ENCODE measurements at regions of chr17 and their contacts with region 1.

Region 1: GRCh38 chr17:17356149-17356930 is 53.2 kb downstream of the NT5M start:
- DNase-seq: peak; percentile 82
- H3K4me3 ChIP-seq: no peak overlapping the region
- H3K27ac ChIP-seq: no peak overlapping the region
- H3K4me1 ChIP-seq: no peaks in the 10 kb centered on the region
- CTCF ChIP-seq: peak; percentile 100

Region 2: DNA sequence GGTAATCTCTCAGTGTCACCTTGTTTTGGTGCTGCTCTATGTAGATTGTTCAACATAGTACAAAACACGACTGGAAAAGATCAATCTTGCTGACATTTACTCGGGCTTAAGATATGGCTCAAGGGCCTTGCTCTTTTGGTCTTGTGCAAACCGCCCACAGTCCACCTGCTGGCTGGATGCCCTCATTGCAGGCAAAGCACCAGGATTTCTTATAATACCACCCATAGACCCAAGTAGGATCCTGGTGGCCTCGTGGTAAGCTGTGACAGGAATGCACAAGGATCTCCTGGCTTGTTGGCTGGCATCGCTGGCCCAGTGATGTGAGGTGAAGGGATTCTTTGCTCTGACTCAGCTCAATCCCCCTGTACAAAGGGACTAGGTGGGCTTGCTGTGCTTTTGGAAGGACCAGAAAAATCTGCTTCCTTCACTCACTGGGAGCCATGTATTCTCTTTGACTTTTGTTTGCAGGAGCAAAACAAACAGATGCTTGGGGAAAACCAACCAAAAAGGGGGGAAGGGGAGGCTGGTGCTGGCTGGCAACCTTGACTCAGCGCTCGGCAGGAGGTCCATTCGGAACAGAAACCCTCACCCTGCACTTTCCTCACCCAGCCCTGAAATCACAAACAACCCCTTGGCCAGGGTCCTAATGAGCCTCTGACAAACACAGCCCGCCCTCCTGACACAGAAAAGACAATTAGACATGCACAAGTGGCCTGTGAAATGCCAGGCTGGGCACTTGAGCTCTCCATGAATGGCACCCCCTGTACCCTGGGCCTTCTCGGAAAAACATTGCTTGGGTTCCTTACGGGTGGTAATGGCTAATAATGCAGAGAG is 83.9 kb after region 1 on chr17:
- CTCF ChIA-PET with region 1: no interaction called
- POLR2A ChIA-PET with region 1: no interaction called
- intact Hi-C with region 1: loop called (anchors 1 kb)
- DNase-seq: peak; percentile 75
- H3K4me3 ChIP-seq: no peak overlapping the region
- H3K27ac ChIP-seq: no peak overlapping the region
- H3K4me1 ChIP-seq: no peaks in the 10 kb centered on the region
- CTCF ChIP-seq: peak; percentile 87

Region 3: DNA sequence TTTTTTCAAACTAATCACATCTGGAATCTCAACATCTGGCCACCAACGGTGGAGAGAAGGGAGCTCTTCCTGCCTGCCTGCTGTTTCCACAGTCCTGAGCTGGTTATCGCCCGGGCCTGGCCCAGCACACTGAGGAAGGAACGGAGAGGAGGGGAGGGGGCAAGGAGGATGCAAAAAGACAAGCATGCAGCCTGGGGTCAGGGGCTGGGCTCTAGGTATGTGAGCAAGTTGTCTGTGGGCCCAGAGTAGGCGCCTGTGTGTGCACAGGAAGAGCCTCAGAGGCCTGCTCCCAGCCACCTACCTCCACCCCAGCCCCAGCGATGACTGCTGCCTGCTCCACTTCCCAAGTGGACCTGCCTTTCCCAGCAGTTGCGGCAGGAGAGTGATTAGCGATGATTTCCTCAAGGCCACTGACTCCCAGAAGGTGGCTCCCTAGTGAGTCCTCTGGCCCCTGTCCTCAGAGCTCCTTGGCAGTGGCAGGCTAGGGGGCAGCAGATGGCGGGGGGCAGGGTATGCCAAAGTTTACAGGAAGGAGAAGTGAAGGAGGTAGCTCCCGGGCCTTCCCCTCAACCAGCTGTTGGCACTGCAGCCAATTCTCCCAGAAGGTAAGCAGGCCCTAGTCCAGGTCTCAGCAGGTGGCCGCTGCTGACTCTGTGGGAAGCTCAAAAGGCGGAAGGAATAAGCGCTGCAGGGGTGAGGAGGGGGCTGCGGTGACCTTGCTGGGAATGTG is 166.8 kb after region 1 on chr17:
- CTCF ChIA-PET with region 1: interaction called, 10 read pairs
- POLR2A ChIA-PET with region 1: no interaction called
- intact Hi-C with region 1: no loop called
- DNase-seq: no peak
- H3K4me3 ChIP-seq: no peak overlapping the region
- H3K27ac ChIP-seq: no peak overlapping the region
- H3K4me1 ChIP-seq: no peaks in the 10 kb centered on the region
- CTCF ChIP-seq: no peak

Region 4: DNA sequence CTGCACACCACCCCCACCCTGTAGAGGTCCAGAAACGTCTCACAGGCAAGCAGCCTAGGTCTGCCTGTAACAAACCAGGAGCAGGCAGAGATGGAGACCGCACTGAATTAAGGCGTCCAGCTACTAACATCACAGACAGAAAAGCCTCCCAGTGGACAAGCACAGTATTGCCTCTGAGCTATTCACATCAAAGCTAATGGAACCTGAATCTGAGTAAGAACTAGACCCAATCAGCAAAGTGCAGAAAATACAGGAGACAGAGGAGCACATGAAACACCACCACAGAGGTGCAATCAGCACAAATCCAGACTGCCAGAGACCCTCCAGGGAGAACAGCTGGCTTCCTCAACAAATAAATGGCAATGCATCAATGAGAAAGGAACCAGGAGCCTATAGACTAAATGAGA is 257.4 kb after region 1 on chr17:
- CTCF ChIA-PET with region 1: no interaction called
- POLR2A ChIA-PET with region 1: no interaction called
- intact Hi-C with region 1: loop called (anchors 1 kb)
- DNase-seq: peak; percentile 67
- H3K4me3 ChIP-seq: no peak overlapping the region
- H3K27ac ChIP-seq: no peak overlapping the region
- H3K4me1 ChIP-seq: no peaks in the 10 kb centered on the region
- CTCF ChIP-seq: peak; percentile 82

Measured in OCI-LY7 (cell line).